ENCODE measurements at regions of chr11 and their contacts with region 1.

Region 1: GRCh38 chr11:13343931-13344717 is 66.5 kb downstream of the BMAL1 start:
- DNase-seq: peak; percentile 64
- H3K4me3 ChIP-seq: no peak overlapping the region
- H3K27ac ChIP-seq: no peak overlapping the region
- H3K4me1 ChIP-seq: peaks cover 30% of the 10 kb centered on the region
- H3K27me3 ChIP-seq: no peaks in the 10 kb centered on the region
- CTCF ChIP-seq: peak; percentile 79 to 82

Region 2: GRCh38 chr11:12813371-12814225 is 530.5 kb before region 1 on chr11:
- CTCF ChIA-PET with region 1: no interaction called
- dilution Hi-C with region 1: no loop called
- in situ Hi-C with region 1: no loop called
- intact Hi-C with region 1: no loop called
- DNase-seq: peak; percentile 78
- H3K4me3 ChIP-seq: no peak overlapping the region
- H3K27ac ChIP-seq: peak overlapping the region; percentile 1
- H3K4me1 ChIP-seq: peaks cover 71% of the 10 kb centered on the region
- H3K27me3 ChIP-seq: no peaks in the 10 kb centered on the region
- CTCF ChIP-seq: peak; percentile 18 to 56

Region 3: DNA sequence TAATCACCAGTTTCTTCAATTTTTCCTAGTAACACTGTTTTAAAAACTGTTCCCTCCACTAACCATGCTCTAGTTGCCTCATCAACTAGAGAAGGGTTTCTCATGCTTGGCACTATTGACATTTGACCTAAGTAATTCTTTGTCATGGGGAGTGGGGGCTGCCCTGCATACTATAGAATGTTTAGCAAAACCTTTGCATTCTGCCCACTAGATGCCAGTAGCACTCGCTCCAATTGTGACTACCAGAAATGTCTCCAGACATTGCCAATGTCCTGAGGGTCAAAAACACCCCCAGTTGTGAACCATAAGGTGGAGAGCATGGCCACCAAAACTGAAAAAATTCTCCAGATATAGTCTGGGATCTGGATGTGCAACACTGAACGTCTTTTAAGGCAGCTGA is 94.1 kb before region 1 on chr11:
- CTCF ChIA-PET with region 1: no interaction called
- dilution Hi-C with region 1: no loop called
- in situ Hi-C with region 1: loop called in 1 of 2 experiments (anchors 10 kb)
- intact Hi-C with region 1: loop called (anchors 1 kb)
- DNase-seq: peak; percentile 20
- H3K4me3 ChIP-seq: no peak overlapping the region
- H3K27ac ChIP-seq: no peak overlapping the region
- H3K4me1 ChIP-seq: no peaks in the 10 kb centered on the region
- H3K27me3 ChIP-seq: no peaks in the 10 kb centered on the region
- CTCF ChIP-seq: peak; percentile 35 to 69

Region 4: DNA sequence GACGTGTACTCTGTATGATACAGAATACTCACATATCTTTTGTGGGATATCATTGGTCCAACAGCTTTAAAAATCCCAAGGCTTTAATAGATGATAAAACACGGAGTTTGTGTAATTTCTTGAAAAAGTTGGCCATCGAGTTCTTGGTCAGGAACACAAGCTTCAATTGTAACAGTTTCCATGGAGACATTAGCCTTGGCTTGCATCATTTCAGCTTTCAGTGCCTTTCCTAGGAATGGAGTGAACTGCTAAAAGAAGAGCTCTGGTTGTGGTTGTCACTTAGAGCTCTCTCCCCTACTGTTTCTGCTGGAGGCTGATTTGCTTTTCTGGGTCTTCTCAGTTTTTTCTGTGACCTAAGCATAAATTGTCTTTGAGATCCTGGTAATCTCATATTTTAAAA is 52.3 kb before region 1 on chr11:
- CTCF ChIA-PET with region 1: no interaction called
- dilution Hi-C with region 1: no loop called
- in situ Hi-C with region 1: no loop called
- intact Hi-C with region 1: loop called (anchors 2 kb)
- DNase-seq: no peak
- H3K4me3 ChIP-seq: no peak overlapping the region
- H3K27ac ChIP-seq: no peak overlapping the region
- H3K4me1 ChIP-seq: peaks cover 2% of the 10 kb centered on the region
- H3K27me3 ChIP-seq: no peaks in the 10 kb centered on the region
- CTCF ChIP-seq: no peak

Region 5: DNA sequence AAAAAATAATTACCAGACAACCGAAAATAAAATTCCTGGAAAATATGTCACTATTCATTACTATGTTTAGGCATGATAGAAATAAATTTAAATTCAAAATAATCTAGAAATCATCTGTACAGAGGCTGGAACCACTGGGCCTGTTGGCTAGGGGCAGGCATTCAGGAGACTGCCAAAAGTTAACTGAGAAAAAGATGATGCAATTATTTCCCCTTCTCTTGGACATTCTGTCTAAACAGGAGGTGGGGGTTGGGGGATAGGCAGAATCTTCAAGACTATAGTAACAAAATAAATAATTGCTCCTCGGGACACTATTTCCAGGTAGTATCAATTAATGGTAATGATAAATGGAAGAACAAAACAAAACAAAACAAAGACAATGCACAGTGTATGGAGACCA is 104.8 kb after region 1 on chr11:
- CTCF ChIA-PET with region 1: no interaction called
- dilution Hi-C with region 1: no loop called
- in situ Hi-C with region 1: no loop called
- intact Hi-C with region 1: no loop called
- DNase-seq: no peak
- H3K4me3 ChIP-seq: no peak overlapping the region
- H3K27ac ChIP-seq: no peak overlapping the region
- H3K4me1 ChIP-seq: peaks cover 13% of the 10 kb centered on the region
- H3K27me3 ChIP-seq: no peaks in the 10 kb centered on the region
- CTCF ChIP-seq: no peak

Region 6: DNA sequence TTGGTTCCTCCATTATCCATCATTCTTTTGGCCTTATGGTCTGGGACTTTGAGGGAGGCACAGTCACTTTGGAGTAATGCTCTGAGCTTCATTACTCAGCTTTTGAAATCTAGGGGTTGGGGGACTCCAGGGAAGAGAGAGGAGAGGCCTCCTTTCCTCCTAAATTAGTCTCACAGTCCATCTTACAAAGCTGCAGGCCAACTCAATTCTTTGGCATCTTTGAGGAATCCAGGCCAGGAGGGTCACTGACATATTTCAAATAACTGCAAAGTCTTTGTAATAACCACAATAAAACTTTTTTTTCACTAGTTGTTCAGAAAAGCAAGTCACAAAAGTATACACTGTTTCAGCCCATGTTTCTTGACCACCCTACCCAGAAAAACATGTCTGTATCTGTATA is 251.0 kb after region 1 on chr11:
- CTCF ChIA-PET with region 1: no interaction called
- dilution Hi-C with region 1: no loop called
- in situ Hi-C with region 1: no loop called
- intact Hi-C with region 1: no loop called
- DNase-seq: no peak
- H3K4me3 ChIP-seq: no peak overlapping the region
- H3K27ac ChIP-seq: no peak overlapping the region
- H3K4me1 ChIP-seq: no peaks in the 10 kb centered on the region
- H3K27me3 ChIP-seq: no peaks in the 10 kb centered on the region
- CTCF ChIP-seq: no peak

Region 7: DNA sequence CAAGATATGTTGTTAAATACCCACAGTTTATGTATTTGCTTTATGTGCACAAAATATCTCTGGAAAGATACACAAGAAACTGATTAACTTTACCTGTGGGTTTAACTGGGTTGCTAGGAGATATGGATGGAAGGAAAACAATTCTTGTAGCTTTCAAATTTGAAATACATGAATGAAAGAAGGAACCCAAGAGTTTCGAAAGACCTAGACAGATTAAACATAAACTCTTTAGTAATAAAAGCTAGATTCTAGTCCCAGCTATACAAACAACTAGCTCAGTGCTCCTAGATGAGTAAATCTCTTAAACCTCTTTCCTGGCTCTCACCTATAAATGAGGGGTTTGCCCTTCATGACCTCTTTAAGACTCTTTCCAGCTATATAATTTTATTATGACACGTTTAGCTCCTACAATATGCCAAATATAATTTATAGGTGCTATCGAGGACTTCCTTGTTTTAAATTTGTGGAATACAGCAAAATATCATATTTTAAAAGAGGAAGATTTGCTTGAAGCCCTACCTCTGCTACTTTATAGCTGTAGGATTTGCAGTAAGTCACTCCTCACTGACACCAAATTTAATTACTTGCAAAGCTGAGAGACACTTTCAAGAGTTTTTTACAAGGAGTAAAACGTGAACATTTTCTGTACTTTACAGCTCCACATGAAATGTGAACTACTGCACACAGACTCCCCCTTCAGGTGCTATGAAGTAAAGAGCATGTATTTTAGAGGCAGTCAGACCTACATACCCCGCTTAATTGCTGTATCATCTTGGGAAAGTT is 964.2 kb after region 1 on chr11:
- CTCF ChIA-PET with region 1: no interaction called
- dilution Hi-C with region 1: no loop called
- in situ Hi-C with region 1: no loop called
- intact Hi-C with region 1: no loop called
- DNase-seq: peak; percentile 32
- H3K4me3 ChIP-seq: no peak overlapping the region
- H3K27ac ChIP-seq: no peak overlapping the region
- H3K4me1 ChIP-seq: peaks cover 32% of the 10 kb centered on the region
- H3K27me3 ChIP-seq: no peaks in the 10 kb centered on the region
- CTCF ChIP-seq: peak; percentile 65 to 77